Right ventricle myocardium inferior (tissue), 1 donor: ENCODE measurements at regions of chr10 and their contacts with region 1.

Region 1: DNA sequence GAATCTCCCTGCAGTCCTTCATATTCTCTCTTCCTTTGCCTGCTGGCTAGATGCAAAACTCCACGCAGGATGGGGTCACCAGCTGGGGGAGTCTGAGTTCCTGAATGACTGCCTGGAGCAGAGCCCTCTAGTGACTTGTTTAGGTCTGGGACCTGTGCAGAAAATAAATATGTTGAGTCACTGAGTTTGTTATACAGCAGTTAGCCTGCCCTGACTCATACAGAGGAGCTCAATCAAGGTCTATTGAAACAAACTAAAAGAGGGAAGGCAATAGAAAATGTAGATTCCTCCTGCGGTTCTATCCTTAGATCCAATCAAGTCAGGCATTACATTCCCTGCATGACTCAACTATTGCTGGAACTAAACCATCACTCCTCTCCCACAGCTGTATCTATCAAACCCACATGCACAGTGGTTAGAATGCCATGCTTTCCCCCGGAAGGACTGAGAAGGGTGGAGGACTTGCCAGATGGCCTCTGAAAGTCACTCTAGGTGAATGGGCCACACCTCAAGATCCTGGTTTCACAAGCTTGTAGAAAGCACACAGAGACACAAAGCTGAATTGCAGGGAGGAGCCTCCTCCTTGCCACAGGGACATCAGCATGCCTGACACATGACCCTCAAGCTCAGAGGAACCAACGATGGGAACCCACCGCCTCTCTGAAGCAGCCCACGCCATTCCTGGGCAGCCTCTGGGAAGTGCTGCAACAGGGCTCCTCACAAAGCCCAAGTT is 73.9 kb downstream of the SH3PXD2A start:
- DNase-seq: no peak
- ATAC-seq: no peak

Region 2: DNA sequence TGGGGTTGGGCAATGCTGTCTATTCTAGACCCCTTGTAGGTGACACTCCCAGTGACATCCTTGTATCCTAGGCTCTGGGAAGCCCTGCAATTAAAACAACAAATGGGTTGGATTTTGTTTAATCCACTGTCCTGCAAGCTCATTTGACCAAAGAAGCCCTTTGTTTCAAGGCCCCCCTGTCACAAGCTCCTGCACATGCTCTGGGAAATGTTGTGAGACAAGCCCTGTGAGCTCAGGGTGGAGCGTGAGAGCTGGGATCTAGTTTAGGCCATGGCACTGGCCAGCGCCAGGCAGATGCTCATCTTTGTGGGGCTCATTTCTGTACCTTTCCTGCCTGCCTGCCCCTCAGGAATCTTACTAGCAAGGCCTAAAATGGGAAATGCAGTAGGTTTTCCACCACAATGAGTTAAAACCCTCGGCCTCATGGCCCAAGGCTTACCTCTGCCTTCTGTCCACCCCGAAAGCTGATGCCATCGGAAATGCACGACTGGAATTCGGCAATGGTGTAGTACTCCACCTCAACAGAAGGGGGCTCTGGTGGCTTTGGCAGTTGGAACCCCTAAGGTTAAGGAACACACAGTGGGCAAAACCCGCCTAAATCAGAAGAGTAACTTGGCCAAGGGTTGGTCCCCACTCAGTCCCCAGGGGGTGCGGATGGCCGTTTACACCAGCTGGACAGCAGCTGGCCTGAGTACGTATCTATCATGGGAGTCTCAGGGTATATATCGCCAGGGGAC is 176.0 kb before region 1 on chr10:
- intact Hi-C with region 1: no loop called
- DNase-seq: no peak
- ATAC-seq: peak; percentile 56

Region 3: DNA sequence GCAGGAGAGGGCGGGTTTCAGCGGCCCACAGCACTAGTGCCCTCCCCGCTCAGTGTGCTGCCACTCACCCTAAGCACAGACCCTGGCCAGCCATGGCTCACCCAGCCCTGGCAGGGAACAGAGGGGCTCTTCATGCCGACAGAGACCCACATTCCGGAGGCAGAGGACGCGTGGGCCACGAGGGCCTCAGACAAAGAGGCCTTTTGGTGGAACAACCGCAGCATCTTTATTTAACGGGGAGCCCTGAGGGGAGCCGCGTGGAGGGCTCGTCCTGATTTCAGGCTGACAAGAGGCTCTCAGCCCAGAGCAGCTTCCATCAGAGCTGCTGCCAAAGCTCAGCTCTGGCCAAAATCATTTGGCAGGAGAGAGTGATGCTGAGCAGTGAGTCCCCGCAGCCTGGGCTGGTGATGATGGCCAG is 53.9 kb before region 1 on chr10:
- intact Hi-C with region 1: loop called (anchors 10 kb)
- DNase-seq: no peak
- ATAC-seq: peak; percentile 88